ENCODE measurements at regions of chrX and their contacts with region 1.

Region 1: GRCh38 chrX:106898462-106898861 is 4.7 kb downstream of the RIPPLY1 start:
- DNase-seq: no peak

Region 2: DNA sequence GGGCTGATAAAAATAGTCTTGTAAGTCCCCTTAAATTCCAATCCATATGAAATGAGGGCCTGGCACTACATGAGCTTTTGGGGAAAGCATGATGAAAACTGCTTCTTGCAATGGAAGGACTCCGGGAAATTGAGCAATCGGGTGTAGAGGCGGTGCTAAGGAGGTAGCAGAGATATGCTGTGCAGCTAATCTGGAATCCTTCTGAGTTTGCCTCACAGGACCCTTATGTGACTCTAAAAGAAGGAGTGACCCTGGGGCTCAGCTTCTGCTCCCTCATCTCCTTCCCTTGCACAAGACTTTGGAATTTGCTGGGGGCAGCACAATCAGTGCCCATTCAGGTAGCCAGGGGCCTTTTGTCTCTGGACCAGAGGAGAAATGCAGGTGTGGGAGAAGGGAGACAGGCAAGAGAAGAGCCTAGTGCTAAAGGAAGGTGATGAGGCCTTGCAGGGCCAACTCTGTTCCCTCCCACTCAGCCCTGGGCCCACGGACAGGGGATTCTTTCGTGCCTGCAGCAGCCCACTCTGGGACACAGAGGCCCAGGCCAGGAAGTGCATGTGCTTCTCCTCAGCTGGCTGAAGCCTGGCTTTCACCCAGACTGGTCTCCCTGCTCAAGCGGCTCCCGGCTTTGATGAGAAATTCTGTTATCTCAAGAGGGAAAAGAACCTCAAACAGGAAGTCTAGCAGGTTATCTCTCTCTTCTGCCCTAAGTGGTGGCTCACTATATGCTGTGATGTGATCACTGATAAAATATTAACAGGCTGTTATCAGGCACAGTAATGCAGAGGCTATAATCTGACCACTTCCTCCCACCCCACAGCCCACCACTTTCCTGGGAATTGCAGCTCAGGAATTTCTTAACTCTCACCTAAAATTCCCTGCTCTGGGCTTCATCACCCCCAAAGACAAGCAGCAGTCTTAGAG is 34.8 kb after region 1 on chrX:
- intact Hi-C with region 1: no loop called
- DNase-seq: no peak

Region 3: DNA sequence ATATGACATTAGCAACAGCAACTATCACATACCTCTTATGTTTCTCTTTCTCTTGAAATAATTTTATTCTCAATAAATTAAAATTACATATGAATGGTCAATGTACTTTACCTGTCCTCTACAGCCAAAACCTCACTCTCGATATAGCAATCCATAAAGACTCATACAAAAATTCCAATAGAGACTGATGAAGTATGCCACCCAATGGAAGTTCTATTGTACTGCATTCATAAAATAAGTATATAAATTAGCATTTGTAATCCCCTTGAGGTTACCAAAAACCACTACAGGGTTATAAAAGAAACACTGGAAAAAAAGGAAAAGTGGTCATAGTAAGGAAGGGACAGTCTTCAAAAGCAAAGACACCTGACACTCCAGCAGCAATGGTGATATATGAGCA is 54.5 kb after region 1 on chrX:
- intact Hi-C with region 1: loop called (anchors 5 kb)
- DNase-seq: no peak

Measured in cardiac septum (tissue), 1 donor.